Mammary epithelial cell (primary cell): ENCODE measurements at regions of chr5 and their contacts with region 1.

Region 1: GRCh38 chr5:78467752-78468357 is 107.4 kb downstream of the SCAMP1 start:
- DNase-seq: peak; percentile 20
- H3K4me3 ChIP-seq: no peak overlapping the region
- H3K27ac ChIP-seq: no peak overlapping the region
- H3K4me1 ChIP-seq: no peaks in the 10 kb centered on the region
- H3K27me3 ChIP-seq: no peaks in the 10 kb centered on the region
- CTCF ChIP-seq: peak; percentile 72 to 76

Region 2: GRCh38 chr5:78056901-78057513 is 410.8 kb before region 1 on chr5:
- CTCF ChIA-PET with region 1: no interaction called
- dilution Hi-C with region 1: no loop called
- in situ Hi-C with region 1: no loop called
- intact Hi-C with region 1: no loop called
- DNase-seq: no peak
- H3K4me3 ChIP-seq: no peak overlapping the region
- H3K27ac ChIP-seq: no peak overlapping the region
- H3K4me1 ChIP-seq: no peaks in the 10 kb centered on the region
- H3K27me3 ChIP-seq: no peaks in the 10 kb centered on the region
- CTCF ChIP-seq: no peak

Region 3: DNA sequence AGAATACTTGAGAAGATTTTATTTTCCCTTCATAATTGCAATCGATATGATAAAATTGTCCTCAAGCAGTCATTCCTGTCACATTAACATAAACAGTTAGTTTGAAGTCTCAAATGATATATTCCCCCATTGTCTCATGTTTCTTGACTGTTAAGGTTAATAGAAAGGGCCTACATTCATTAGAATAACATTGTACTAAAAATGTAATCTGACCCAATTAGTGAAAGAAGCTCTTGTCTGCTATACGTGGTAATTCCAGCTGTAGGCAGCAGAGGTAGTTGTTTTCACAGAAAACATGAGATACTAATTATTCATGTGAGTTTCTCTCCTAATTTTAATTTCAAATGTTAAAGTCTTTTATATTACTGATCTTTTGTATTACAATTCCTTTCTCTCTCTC is 147.5 kb before region 1 on chr5:
- CTCF ChIA-PET with region 1: interaction called, 8 read pairs
- dilution Hi-C with region 1: no loop called
- in situ Hi-C with region 1: no loop called
- intact Hi-C with region 1: loop called (anchors 2 kb)
- DNase-seq: peak; percentile 29
- H3K4me3 ChIP-seq: no peak overlapping the region
- H3K27ac ChIP-seq: no peak overlapping the region
- H3K4me1 ChIP-seq: no peaks in the 10 kb centered on the region
- H3K27me3 ChIP-seq: no peaks in the 10 kb centered on the region
- CTCF ChIP-seq: peak; percentile 72 to 75

Region 4: DNA sequence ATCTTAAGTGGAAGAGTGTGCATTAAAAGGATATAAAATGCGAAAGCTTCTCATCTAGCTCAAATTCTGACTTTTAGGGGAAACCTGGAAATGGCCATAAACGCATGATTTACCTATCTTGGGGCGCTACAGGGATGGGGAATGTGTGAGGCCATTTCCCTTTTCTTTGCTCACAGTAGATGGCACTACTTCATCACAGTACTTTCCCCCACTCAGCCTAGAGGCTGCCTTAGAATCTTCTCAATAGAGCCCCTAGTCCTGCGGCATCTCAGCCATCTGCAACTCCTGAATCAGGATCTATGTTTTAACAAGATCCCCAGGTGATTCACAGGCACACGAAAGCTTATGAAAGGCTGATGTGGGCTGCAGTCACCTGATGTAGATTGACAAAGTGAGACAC is 70.0 kb after region 1 on chr5:
- CTCF ChIA-PET with region 1: interaction called, 8 read pairs
- dilution Hi-C with region 1: no loop called
- in situ Hi-C with region 1: no loop called
- intact Hi-C with region 1: loop called (anchors 1 kb)
- DNase-seq: peak; percentile 91
- H3K4me3 ChIP-seq: no peak overlapping the region
- H3K27ac ChIP-seq: peak overlapping the region; percentile 56
- H3K4me1 ChIP-seq: peaks cover 37% of the 10 kb centered on the region
- H3K27me3 ChIP-seq: no peaks in the 10 kb centered on the region
- CTCF ChIP-seq: peak; percentile 57 to 58

Region 5: GRCh38 chr5:78699565-78700241 is 231.8 kb after region 1 on chr5:
- CTCF ChIA-PET with region 1: no interaction called
- dilution Hi-C with region 1: no loop called
- in situ Hi-C with region 1: no loop called
- intact Hi-C with region 1: no loop called
- DNase-seq: peak; percentile 100
- H3K4me3 ChIP-seq: peak overlapping the region in 1 of 3 experiments; percentile 6
- H3K27ac ChIP-seq: peak overlapping the region; percentile 97
- H3K4me1 ChIP-seq: peaks cover 32% of the 10 kb centered on the region
- H3K27me3 ChIP-seq: no peaks in the 10 kb centered on the region
- CTCF ChIP-seq: no peak

Region 6: DNA sequence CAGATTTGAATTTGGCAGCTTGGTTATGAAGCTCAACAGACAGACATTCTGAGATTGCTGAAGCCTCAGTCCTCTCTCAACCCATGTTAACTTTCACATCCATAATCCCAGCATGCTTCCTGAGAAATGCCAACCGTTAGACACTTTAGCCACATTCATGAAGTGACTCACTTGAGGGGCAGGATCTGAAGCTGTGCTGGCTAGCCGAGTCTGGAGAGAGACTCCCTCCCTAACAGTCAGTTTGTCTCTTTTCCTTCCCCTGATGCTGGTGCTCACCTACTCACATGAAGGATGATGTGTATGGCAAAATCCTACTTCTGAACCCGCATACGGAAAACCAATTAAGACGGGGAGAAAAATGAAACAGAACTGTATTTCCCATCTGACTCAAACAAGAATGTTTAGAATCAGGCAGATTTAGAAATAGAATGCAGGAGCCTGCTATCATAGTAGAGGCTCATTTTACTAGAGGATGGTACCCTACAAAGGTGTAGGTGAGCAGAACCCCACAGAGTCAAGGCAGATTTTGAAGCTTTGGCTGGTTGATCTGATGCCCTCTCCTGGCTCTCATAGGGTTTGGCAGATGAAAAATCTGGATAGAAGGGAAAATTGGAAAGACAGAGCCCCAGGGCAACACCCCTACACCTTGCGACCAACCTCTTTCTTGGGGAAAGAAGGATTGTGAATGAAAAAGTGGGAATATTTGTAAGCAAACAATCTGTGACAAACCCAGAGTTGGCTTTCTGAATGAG is 331.6 kb after region 1 on chr5:
- CTCF ChIA-PET with region 1: no interaction called
- dilution Hi-C with region 1: no loop called
- in situ Hi-C with region 1: no loop called
- intact Hi-C with region 1: loop called (anchors 10 kb)
- DNase-seq: no peak
- H3K4me3 ChIP-seq: no peak overlapping the region
- H3K27ac ChIP-seq: no peak overlapping the region
- H3K4me1 ChIP-seq: no peaks in the 10 kb centered on the region
- H3K27me3 ChIP-seq: no peaks in the 10 kb centered on the region
- CTCF ChIP-seq: peak in 1 of 2 donors; percentile 18

Region 7: DNA sequence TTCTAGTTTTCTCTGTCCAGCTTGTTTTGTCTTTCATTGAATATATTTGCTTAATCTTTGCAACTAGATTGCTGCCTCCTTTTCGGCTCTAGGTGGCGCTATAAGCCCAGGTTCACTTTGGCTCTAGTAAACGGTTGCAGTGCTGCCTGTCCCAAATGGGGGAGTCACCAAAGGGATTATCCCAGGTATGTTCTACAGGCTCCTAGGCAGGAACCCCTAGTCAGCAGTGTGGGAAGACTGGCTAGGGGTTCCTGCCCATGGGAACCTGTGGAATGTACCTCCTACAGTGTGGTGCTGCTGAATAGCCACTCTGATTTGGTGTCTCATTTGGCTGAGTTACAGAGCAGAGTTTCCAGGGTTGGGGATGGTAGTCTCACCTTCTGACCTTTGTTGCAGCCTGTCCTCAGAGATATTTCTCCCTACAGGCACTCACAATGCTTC is 432.1 kb after region 1 on chr5:
- CTCF ChIA-PET with region 1: no interaction called
- dilution Hi-C with region 1: no loop called
- in situ Hi-C with region 1: no loop called
- intact Hi-C with region 1: loop called (anchors 2 kb)
- DNase-seq: peak; percentile 44
- H3K4me3 ChIP-seq: no peak overlapping the region
- H3K27ac ChIP-seq: no peak overlapping the region
- H3K4me1 ChIP-seq: no peaks in the 10 kb centered on the region
- H3K27me3 ChIP-seq: no peaks in the 10 kb centered on the region
- CTCF ChIP-seq: peak; percentile 79 to 83

Region 8: DNA sequence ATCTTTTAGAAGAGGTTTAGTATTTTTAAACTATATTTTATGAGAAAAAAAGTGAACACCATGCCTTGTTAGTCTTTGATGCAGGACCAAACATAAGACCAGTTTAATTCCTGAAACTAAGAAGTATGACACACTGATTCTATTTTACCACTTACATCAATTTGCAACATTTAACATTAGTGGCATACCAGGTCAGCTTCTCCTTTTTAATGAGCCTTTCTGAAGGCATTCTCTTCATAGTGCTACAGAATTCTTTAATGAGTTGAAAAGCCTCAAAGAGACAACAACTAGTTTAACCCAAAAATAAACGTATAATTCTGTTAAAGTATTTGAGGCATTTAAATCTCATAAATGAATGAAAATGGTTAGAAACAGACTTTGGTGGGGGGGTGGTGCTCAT is 489.0 kb after region 1 on chr5:
- CTCF ChIA-PET with region 1: no interaction called
- dilution Hi-C with region 1: no loop called
- in situ Hi-C with region 1: no loop called
- intact Hi-C with region 1: no loop called
- DNase-seq: no peak
- H3K4me3 ChIP-seq: no peak overlapping the region
- H3K27ac ChIP-seq: no peak overlapping the region
- H3K4me1 ChIP-seq: peaks cover 9% of the 10 kb centered on the region
- H3K27me3 ChIP-seq: no peaks in the 10 kb centered on the region
- CTCF ChIP-seq: no peak